ENCODE measurements at regions of chr3 and their contacts with region 1.

Region 1: GRCh38 chr3:20173844-20174410 is 12.1 kb downstream of the SGO1 start:
- DNase-seq: no peak
- ATAC-seq: peak; percentile 50
- H3K4me3 Mint-ChIP-seq: no peak overlapping the region
- H3K27ac Mint-ChIP-seq: no peak overlapping the region
- H3K4me1 Mint-ChIP-seq: peaks cover 13% of the 10 kb centered on the region
- H3K27me3 Mint-ChIP-seq: no peaks in the 10 kb centered on the region
- CTCF ChIP-seq: no peak

Region 2: DNA sequence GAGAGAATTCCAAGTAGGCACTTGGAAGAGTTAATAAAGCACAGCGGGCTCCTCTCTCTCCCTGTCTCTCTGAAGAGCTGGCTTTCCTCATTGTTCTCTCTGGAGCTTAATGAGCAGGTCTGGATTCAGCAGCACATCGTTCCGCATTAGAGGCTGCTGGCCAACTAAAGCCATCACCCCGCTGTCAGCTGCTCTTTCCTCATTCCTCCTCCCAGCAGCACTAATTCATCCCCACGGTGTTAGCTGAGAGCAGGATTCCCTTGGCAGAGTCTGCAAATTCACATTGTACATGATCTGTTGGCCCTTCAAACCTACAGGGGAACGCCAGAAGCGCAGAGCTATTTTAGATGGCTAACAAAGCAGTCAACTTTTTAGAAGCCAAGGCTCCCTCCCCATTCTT is 32.1 kb before region 1 on chr3:
- CTCF ChIA-PET with region 1: no interaction called
- POLR2A ChIA-PET with region 1: no interaction called
- intact Hi-C with region 1: loop called (anchors 5 kb)
- DNase-seq: no peak
- ATAC-seq: no peak
- H3K4me3 Mint-ChIP-seq: no peak overlapping the region
- H3K27ac Mint-ChIP-seq: no peak overlapping the region
- H3K4me1 Mint-ChIP-seq: peaks cover 4% of the 10 kb centered on the region
- H3K27me3 Mint-ChIP-seq: no peaks in the 10 kb centered on the region
- CTCF ChIP-seq: no peak

Region 3: GRCh38 chr3:20417388-20418108 is 243.6 kb after region 1 on chr3:
- CTCF ChIA-PET with region 1: no interaction called
- POLR2A ChIA-PET with region 1: no interaction called
- intact Hi-C with region 1: no loop called
- DNase-seq: no peak
- ATAC-seq: no peak
- H3K4me3 Mint-ChIP-seq: no peak overlapping the region
- H3K27ac Mint-ChIP-seq: no peak overlapping the region
- H3K4me1 Mint-ChIP-seq: no peaks in the 10 kb centered on the region
- H3K27me3 Mint-ChIP-seq: no peaks in the 10 kb centered on the region
- CTCF ChIP-seq: no peak

Measured in activated B cell treated with CpG ODN at 0.5 μM for 24 hours (primary cell).